ENCODE measurements at regions of chr19 and their contacts with region 1.

Region 1: DNA sequence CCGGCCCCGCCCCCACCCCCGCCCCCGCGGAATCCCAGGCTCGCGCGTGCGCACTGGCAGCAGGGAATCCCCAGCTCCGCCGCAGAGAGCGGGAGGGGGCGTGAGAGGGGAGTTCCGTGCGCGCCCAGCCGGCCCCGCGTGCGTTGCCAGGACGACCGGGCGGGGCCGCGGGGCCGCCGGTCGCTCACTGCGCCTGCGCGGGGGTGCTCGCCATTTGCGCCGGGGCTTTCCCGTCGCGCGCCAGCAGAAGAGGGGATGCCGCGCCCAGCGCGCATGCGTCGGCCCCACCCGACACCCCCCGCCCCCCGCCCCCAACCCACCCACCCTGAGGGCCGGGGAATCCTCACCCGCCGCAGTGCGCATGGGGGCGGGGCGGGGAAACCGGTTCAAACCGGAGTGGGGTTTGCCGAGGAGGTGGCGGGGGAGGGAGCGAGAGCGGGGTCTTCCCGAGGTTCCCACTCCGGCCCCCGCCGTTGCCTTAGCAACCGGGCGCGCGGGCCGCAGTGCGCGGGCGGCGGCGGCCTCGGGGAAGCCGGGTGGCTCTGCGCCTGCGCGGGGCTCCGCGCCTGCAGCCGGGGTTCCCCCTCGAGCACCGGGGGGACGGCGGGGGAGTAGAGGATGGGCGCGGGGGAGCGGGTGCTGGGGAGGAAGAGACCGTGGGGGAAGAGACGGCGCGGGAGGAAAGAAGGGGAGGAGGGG is 15.1 kb downstream of the CCDC124 start:
- DNase-seq: peak; percentile 94 to 97 (median 96)
- H3K4me3 ChIP-seq: peak overlapping the region in 1 of 2 donors; percentile 43
- H3K4me3 Mint-ChIP-seq: peak overlapping the region; percentile 54 to 90 (median 80)
- H3K27ac ChIP-seq: peak overlapping the region; percentile 100
- H3K27ac Mint-ChIP-seq: peak overlapping the region; percentile 64 to 99 (median 84)
- H3K4me1 ChIP-seq: peaks cover 52% of the 10 kb centered on the region
- H3K4me1 Mint-ChIP-seq: peaks cover 25 to 62% (median 41%) of the 10 kb centered on the region in 4 donors
- H3K27me3 ChIP-seq: peaks cover 25% of the 10 kb centered on the region
- H3K27me3 Mint-ChIP-seq: peaks cover 21 to 27% of the 10 kb centered on the region in 2 donors

Region 2: GRCh38 chr19:18160971-18161635 is 213.1 kb after region 1 on chr19:
- CTCF ChIA-PET with region 1: interaction called, 4 read pairs
- POLR2A ChIA-PET with region 1: no interaction called
- intact Hi-C with region 1: loop called (anchors 10 kb)
- DNase-seq: peak; percentile 59 to 88 (median 81)
- H3K4me3 ChIP-seq: no peak overlapping the region
- H3K4me3 Mint-ChIP-seq: peak overlapping the region in 5 of 8 donors; percentile 46 to 69 (median 53)
- H3K27ac ChIP-seq: peak overlapping the region; percentile 51
- H3K27ac Mint-ChIP-seq: peak overlapping the region in 4 of 7 donors; percentile 52 to 75 (median 58)
- H3K4me1 ChIP-seq: peaks cover 17% of the 10 kb centered on the region
- H3K4me1 Mint-ChIP-seq: peaks cover 3 to 17% (median 8%) of the 10 kb centered on the region in 4 donors
- H3K27me3 ChIP-seq: no peaks in the 10 kb centered on the region
- H3K27me3 Mint-ChIP-seq: no peaks in the 10 kb centered on the region

Measured in CD4-positive, alpha-beta memory T cell (primary cell).